ENCODE measurements at regions of chr11 and their contacts with region 1.

Region 1: DNA sequence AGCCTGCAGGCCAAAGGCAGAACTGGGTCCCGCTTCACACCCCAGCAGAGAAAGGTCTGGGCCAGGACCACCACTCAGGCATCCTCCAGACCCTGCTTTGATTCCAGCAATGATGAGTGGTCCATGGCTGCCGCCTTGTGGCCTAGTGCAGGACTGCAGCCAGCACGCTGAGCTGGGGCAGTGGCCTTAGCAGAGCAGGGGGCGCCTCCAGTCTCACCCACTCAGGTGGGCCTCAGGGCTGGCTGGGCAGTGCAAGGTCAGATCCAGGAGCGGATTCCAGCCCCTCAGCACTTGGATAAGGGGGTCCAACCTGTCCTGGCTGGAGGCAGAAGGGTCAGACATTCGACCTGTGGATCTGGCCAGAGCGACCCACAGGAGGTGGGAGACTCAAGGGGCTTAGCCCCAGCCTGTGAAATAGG is 9.6 kb upstream of the PDE2A start:
- DNase-seq: peak; percentile 91
- H3K4me3 ChIP-seq: peak overlapping the region in 1 of 2 experiments; percentile 40; a peak in 1 of 4 replicates
- H3K27ac ChIP-seq: no peak overlapping the region
- H3K4me1 ChIP-seq: peaks cover 0 to 20% of the 10 kb centered on the region in 2 experiments; a peak in 1 of 4 replicates
- H3K27me3 ChIP-seq: no peaks in the 10 kb centered on the region
- CTCF ChIP-seq: peak; percentile 86
- EP300 ChIP-seq: no peak
- RAD21 ChIP-seq: peak; percentile 88

Region 2: DNA sequence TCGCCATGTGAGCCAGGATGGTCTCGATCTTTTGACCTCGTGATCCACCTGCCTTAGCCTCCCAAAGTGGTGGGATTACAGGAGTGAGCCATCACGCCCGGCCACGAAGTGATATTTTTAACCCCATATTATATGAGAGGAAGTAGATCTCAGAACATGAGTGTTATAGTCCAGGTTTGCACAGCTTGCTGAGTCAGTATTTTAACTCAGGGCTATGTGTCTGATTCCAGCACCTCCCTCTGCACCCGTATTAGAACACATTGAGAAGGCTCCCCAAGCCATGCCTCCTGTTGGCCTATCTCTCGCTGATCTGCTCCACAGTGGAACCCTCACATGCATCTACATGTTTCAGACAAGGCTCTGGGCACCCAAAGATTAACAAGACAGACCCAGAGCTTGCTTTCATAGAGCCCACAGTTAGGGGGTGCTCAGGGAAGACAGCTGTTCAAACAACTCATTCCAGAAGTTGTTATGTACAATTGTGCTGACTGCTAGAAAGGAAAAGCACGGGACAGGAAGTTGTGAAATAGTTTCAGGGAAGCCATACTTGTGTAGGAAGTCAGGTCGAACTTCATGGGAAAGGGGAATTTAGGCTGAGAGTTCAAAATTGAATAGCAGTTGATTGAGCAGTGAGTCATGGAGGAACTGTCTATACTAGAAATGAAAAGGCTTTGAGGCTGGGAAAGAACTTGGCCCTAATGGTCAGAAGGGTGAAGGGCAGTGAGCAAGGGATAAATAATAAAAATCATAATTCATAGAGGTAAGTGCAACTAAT is 200.2 kb before region 1 on chr11:
- CTCF ChIA-PET with region 1: interaction called, 16 read pairs
- POLR2A ChIA-PET with region 1: no interaction called
- DNase-seq: no peak
- H3K4me3 ChIP-seq: no peak overlapping the region
- H3K27ac ChIP-seq: no peak overlapping the region
- H3K4me1 ChIP-seq: no peaks in the 10 kb centered on the region; a peak in 1 of 4 replicates
- H3K27me3 ChIP-seq: no peaks in the 10 kb centered on the region; the same call in 1 of the 2 replicates
- CTCF ChIP-seq: no peak
- EP300 ChIP-seq: no peak
- RAD21 ChIP-seq: no peak

Region 3: DNA sequence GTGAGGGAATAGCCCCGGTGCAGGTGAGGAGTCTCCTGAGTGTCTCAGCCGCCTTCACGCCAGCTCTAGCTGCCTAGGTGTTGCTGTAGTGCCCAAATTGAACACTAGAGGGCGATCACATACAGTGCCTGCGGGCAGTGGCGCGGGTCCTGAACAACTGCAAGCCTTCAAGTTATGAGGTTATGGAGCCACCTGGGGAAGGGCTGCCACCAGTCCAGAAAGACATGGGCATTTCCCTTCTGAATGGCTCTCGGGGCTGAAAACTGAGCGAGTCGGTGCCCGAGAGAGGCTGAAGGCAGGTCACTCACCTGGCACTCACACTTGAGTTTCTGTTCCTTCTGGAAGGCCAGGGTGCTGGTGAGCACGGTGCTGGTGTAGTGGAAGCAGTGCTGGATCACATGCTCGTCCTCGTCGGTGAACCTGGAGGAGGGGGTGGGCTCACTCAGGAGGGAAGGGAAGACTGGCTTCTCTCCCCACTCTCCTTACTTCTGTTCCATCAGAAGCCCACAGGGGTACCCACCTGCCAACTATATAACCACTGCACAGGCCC is 98.0 kb before region 1 on chr11:
- CTCF ChIA-PET with region 1: interaction called, 207 read pairs
- POLR2A ChIA-PET with region 1: no interaction called
- DNase-seq: peak; percentile 89
- H3K4me3 ChIP-seq: no peak overlapping the region
- H3K27ac ChIP-seq: no peak overlapping the region
- H3K4me1 ChIP-seq: no peaks in the 10 kb centered on the region; a peak in 1 of 4 replicates
- H3K27me3 ChIP-seq: peaks cover 20% of the 10 kb centered on the region
- CTCF ChIP-seq: peak; percentile 90
- EP300 ChIP-seq: no peak
- RAD21 ChIP-seq: peak; percentile 87

Region 4: GRCh38 chr11:72642884-72643511 is 40.8 kb before region 1 on chr11:
- CTCF ChIA-PET with region 1: interaction called, 41 read pairs
- POLR2A ChIA-PET with region 1: no interaction called
- DNase-seq: peak; percentile 92
- H3K4me3 ChIP-seq: peak overlapping the region; percentile 42 to 61
- H3K27ac ChIP-seq: no peak overlapping the region
- H3K4me1 ChIP-seq: peaks cover 5 to 16% of the 10 kb centered on the region in 2 experiments; a peak in 1 of 4 replicates
- H3K27me3 ChIP-seq: peaks cover 30% of the 10 kb centered on the region
- CTCF ChIP-seq: peak; percentile 76
- EP300 ChIP-seq: no peak
- RAD21 ChIP-seq: peak; percentile 85

Region 5: DNA sequence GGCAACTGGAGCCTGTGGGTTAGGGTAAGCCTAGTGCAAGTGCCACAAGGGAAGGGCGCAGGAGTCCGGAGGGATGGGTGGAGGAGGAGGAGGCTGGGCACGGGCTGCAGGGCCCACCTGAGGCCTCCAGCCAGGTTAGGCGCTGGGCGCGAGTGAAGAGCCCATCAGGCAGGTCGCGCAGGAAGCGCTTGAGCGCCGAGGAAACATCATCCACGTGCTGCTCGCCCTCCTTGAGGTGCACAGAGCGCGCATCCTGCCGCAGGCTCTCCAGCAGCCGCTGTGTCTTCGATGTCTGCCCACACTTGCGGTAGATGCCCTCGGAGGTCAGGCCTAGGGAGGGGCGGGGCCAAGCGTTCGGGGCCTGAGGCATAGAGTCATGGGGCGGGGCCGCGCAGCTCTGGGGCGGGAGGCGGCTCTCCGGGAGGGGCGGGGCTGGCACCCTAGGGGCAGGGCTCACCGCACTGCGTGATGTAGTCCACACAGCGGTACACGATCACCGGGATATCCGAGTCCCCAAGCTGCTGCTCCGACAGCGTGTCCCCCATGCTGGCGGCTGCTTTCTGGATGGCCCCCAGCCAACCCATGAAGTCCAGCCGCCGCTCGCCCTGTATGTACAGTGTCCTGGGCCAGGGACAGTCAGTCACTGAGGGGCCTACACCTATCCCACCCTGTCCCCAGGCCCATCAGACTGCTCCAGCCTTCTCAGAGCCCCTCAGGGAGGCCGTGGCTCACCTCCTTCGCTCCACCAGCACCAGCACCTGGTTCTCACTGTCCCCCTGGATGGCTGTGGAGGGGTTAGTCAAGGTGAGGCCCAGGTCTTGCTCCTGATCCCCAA is 13.3 kb after region 1 on chr11:
- CTCF ChIA-PET with region 1: interaction called, 36 read pairs
- POLR2A ChIA-PET with region 1: no interaction called
- DNase-seq: no peak
- H3K4me3 ChIP-seq: no peak overlapping the region
- H3K27ac ChIP-seq: no peak overlapping the region
- H3K4me1 ChIP-seq: no peaks in the 10 kb centered on the region
- H3K27me3 ChIP-seq: no peaks in the 10 kb centered on the region
- CTCF ChIP-seq: no peak
- EP300 ChIP-seq: no peak
- RAD21 ChIP-seq: no peak

Region 6: GRCh38 chr11:72722050-72722748 is 38.4 kb after region 1 on chr11:
- CTCF ChIA-PET with region 1: interaction called, 19 read pairs
- POLR2A ChIA-PET with region 1: no interaction called
- DNase-seq: peak; percentile 92
- H3K4me3 ChIP-seq: peak overlapping the region; percentile 50 to 65
- H3K27ac ChIP-seq: peak overlapping the region; percentile 65 to 96
- H3K4me1 ChIP-seq: peaks cover 13 to 53% of the 10 kb centered on the region in 2 experiments
- H3K27me3 ChIP-seq: no peaks in the 10 kb centered on the region
- CTCF ChIP-seq: no peak
- EP300 ChIP-seq: no peak
- RAD21 ChIP-seq: no peak

Measured in SK-N-SH (cell line).